Stomach (tissue), 19 donors: ENCODE measurements at regions of chr14 and their contacts with region 1.

Region 1: GRCh38 chr14:23483236-23483854 is 13.8 kb downstream of the NGDN start:
- DNase-seq: peak in 1 of 2 donors; percentile 57
- H3K4me3 ChIP-seq: no peak overlapping the region
- H3K27ac ChIP-seq: no peak overlapping the region
- H3K4me1 ChIP-seq: peaks cover 0 to 1% (median 0%) of the 10 kb centered on the region in 4 donors
- H3K27me3 ChIP-seq: no peaks in the 10 kb centered on the region
- CTCF ChIP-seq: peak in 1 of 7 experiments; percentile 13
- EP300 ChIP-seq: no peak
- POLR2A ChIP-seq: no peak

Region 2: DNA sequence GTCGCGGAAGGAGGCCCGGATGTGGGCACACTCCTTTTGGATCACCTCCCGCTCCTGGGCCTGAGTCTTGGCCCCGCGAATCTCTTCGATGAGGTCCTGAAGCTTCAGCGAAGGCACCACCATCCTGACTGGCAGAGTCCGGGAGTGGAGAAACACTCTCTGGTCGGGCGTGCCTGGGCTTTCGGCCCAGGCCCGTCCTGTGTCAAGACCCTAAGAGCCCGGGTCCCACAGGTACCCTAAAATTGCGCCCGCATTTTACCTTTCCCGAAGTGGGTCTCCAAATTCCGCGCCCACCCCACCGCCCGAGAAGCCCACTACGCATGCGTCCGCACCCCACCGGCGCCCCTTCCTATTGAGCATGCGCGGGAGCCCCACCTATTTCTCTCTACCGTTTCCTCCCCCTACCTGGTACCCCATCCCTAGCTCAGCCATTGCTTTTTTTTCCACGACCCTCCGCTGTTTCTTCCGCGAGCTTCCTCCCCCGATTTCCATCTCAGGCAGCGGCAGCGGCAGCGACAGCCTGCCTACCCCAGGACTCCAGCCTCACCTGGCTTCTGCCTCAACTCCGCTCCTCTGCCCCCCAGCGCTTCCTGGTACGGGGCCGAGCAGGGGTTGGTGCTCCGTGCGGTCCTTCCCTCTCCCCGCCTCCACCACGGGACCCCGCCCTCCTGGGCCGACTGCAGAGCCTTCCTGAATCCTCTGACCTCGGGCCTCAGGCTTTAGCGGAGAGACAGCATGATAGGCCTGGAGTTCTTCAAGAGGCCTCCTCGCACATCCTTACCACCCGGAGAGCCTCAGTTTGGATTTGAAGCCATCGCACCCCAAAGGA is 84.1 kb after region 1 on chr14 and contains the start of gene AP1G2:
- intact Hi-C with region 1: loop called (anchors 2 kb)
- DNase-seq: peak; percentile 93 to 96
- H3K4me3 ChIP-seq: peak within 1 kb of the TSS; percentile 65 to 71 (median 68)
- H3K27ac ChIP-seq: peak within 1 kb of the TSS; percentile 79 to 90 (median 83)
- H3K4me1 ChIP-seq: peaks cover 18 to 48% (median 34%) of the 10 kb centered on the region in 4 donors
- H3K27me3 ChIP-seq: peaks cover 0 to 17% (median 0%) of the 10 kb centered on the region in 3 donors
- CTCF ChIP-seq: no peak
- EP300 ChIP-seq: no peak
- POLR2A ChIP-seq: peak in 1 of 4 donors; percentile 75
- total RNA-seq, gene AP1G2: 39.1 to 531 (median 212) TPM